Activated naive CD4-positive, alpha-beta T cell treated with anti-CD3 and anti-CD28 coated beads, Interleukin-2, amount 10 ng/mL, durations not matched to agents 7 days and 5 days (primary cell): ENCODE measurements at regions of chr5 and their contacts with region 1.

Region 1: DNA sequence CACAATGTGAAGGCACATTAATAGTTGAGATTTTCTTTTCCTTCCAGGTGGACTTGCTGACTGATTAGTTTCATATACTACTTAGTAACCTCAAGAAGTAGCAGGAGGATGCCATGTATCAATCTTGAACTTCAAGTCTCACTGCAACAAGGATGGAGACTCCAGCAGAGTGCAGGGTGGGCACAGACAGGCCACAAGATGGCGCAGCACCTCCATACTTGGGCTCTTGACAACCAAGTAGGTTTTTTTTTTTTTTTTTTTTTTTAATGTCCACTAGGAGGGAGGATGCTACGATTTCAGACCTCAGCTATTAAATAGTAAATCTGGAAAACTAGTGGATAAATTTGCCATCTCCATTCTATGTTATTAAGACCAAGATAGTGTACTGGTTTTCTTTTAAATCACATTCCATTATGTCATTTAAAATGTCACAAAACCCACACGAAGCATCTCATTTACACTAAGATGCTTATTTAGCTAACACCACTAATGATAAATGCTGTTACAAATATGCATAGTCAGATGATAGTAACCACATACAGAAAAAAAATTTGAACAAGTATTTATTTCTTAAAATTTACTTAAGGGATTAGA is 58.6 kb downstream of the IL6ST start:
- DNase-seq: peak; percentile 85
- H3K4me3 Mint-ChIP-seq: no peak overlapping the region
- H3K27ac Mint-ChIP-seq: no peak overlapping the region
- H3K4me1 Mint-ChIP-seq: peaks cover 2% of the 10 kb centered on the region
- H3K27me3 Mint-ChIP-seq: no peaks in the 10 kb centered on the region

Region 2: DNA sequence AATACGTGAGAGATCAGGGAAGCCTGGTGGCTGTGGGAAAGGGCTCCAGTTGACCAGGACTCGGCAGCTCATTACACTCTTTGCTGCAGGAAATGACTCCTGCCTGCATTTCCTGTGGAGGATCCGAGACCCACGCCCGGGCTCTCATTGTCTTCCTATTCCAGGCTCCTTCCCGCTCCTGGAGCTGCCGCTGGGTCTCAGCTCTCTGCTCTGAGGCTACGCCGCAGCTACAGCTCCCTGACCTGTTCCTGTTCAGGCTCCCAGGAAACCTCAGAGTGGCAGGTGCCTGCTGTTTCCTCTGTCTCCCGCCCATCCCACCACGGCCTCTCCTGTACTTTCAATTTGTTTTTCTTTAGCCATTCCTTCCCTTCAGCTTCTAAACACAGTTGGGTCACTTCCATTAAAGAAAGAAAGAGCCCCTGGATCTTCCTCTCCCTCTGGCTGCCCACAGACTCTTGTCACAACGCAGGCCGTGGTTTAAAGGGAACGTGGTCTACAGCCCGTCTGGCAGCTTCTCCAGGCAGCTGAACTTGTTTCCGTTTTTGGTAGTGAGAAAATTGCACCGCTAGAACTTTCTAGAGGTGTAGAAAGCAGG is 12.9 kb before region 1 on chr5:
- CTCF ChIA-PET with region 1: interaction called, 11 read pairs
- DNase-seq: peak; percentile 43
- H3K4me3 Mint-ChIP-seq: peak overlapping the region; percentile 79
- H3K27ac Mint-ChIP-seq: peak overlapping the region; percentile 65
- H3K4me1 Mint-ChIP-seq: peaks cover 37% of the 10 kb centered on the region
- H3K27me3 Mint-ChIP-seq: peaks cover 17% of the 10 kb centered on the region

Region 3: DNA sequence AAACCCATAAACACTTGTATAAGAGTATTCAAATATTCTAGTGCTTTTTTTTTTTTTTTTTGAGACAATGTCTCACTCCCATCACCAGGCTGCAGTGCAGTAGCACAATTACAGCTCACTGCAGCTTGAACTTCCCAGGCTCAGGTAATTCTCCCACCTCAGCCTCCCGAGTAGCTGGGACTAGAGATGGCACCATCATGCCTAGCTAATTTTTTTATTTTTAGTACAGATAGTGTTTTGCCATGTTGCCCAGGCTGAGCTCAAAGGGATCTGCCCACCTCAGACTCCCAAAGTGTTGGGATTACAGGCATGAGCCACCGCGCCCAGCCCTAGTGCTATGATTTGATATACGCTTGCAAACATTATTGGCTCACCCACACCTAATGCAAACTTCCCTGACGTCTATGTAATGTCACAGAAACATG is 46.8 kb after region 1 on chr5:
- CTCF ChIA-PET with region 1: interaction called, 20 read pairs
- DNase-seq: peak; percentile 49
- H3K4me3 Mint-ChIP-seq: peak overlapping the region; percentile 18
- H3K27ac Mint-ChIP-seq: peak overlapping the region; percentile 25
- H3K4me1 Mint-ChIP-seq: peaks cover 84% of the 10 kb centered on the region
- H3K27me3 Mint-ChIP-seq: no peaks in the 10 kb centered on the region

Region 4: GRCh38 chr5:56112526-56113121 is 176.4 kb after region 1 on chr5:
- CTCF ChIA-PET with region 1: no interaction called
- DNase-seq: no peak
- H3K4me3 Mint-ChIP-seq: no peak overlapping the region
- H3K27ac Mint-ChIP-seq: no peak overlapping the region
- H3K4me1 Mint-ChIP-seq: peaks cover 25% of the 10 kb centered on the region
- H3K27me3 Mint-ChIP-seq: no peaks in the 10 kb centered on the region